Posterior vena cava (tissue), 2 donors: ENCODE measurements at regions of chr18 and their contacts with region 1.

Region 1: GRCh38 chr18:48065596-48065995 is 135.1 kb upstream of the SMAD2 start:
- DNase-seq: peak; percentile 52

Region 2: GRCh38 chr18:47997338-47997780 is 68.2 kb before region 1 on chr18:
- intact Hi-C with region 1: no loop called
- DNase-seq: no peak

Region 3: GRCh38 chr18:48055351-48055750 is 10.2 kb before region 1 on chr18:
- intact Hi-C with region 1: loop called in 1 of 2 experiments (anchors 1 kb)
- DNase-seq: peak; percentile 37

Region 4: DNA sequence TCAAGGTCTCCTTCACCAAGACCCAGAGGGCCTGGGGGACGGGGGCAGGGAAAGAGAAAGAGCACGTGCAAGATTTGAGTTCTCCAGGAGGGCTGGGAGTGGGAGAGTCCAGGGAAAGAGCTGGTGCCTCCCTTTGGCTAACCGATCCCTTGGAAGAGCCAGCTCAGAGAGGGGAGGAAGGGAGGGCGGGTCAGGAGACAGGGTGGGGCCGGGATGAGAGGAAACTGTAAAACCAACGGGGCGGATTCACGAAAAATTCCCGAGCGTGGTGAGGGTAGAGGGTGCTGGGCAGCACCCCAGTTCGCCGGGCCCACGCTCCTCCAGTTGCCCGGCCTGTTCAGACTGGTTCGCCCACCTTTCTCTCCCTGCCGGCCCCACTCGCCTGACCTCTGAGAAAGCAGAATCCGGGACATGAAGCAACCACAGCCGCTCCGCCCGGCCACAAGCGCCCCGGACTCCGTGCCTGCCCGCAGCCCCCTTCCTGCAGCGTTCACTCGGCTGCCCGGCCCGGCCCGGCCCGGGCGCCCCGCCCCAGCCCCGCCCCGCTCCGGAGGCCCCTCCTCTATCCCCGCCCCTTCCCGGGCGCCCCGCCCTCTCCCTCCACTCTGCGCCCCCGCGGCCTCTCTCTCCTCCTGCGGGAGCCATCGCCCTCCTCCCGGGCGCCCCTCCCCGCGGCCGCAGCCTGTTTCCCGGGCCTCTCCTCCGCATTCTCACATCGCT is 95.8 kb after region 1 on chr18:
- intact Hi-C with region 1: no loop called
- DNase-seq: peak; percentile 94